H1 (cell line): ENCODE measurements at regions of chr22 and their contacts with region 1.

Region 1: DNA sequence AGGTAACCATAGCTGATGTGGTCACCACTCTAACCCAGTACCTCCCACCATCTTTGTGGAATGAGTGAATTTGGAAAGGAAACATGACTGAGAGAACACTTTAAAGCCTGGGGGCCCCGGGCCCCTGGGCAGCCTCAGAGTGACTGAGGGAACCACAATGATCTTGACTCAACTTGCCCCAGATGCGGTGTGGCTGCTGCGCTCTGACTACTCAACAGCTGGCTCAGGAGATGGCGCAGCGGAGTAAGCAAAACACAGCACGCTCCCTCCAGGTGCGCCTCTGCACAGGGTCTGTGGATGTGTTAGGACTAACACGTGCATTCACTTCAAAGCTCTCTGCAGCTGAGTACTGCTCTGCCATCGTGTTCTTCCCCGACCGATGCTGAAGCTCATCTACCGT is 5.9 kb downstream of the RNF215 start:
- DNase-seq: no peak
- H3K4me3 ChIP-seq: no peak overlapping the region
- H3K27ac ChIP-seq: no peak overlapping the region
- H3K4me1 ChIP-seq: peaks cover 0 to 3% (median 0%) of the 10 kb centered on the region in 4 experiments; a peak in 2 of 7 replicates
- H3K27me3 ChIP-seq: no peaks in the 10 kb centered on the region
- CTCF ChIP-seq: no peak
- EP300 ChIP-seq: no peak
- POLR2A ChIP-seq: no peak
- RAD21 ChIP-seq: no peak

Region 2: GRCh38 chr22:30356449-30357235 is 24.6 kb before region 1 on chr22 and contains the starts of genes CCDC157 and SF3A1:
- CTCF ChIA-PET with region 1: interaction called, 6 read pairs
- POLR2A ChIA-PET with region 1: interaction called, 11 read pairs
- DNase-seq: peak; percentile 72 to 91
- H3K4me3 ChIP-seq: peak within 1 kb of the TSS; percentile 78 to 93 (median 91)
- H3K27ac ChIP-seq: peak within 1 kb of the TSS; percentile 93
- H3K4me1 ChIP-seq: peaks cover 2 to 11% (median 4%) of the 10 kb centered on the region in 4 experiments; a peak in 6 of 7 replicates
- H3K27me3 ChIP-seq: no peaks in the 10 kb centered on the region
- CTCF ChIP-seq: no peak
- EP300 ChIP-seq: peak in 1 of 2 experiments; percentile 5; a peak in 1 of 3 replicates
- POLR2A ChIP-seq: peak; percentile 87 to 98
- RAD21 ChIP-seq: no peak
- total RNA-seq, gene CCDC157: 4.1 and 4.8 TPM in 2 replicates
- total RNA-seq, gene SF3A1: 275 and 285 TPM in 2 replicates

Region 3: GRCh38 chr22:30368431-30368830 is 12.8 kb before region 1 on chr22:
- CTCF ChIA-PET with region 1: interaction called, 28 read pairs
- POLR2A ChIA-PET with region 1: interaction called, 14 read pairs
- DNase-seq: no peak
- H3K4me3 ChIP-seq: no peak overlapping the region
- H3K27ac ChIP-seq: 0 out of 2 replicates have a peak overlapping the region, but pooled peaks have one; percentile 1
- H3K4me1 ChIP-seq: peaks cover 0 to 2% (median 0%) of the 10 kb centered on the region in 4 experiments; a peak in 1 of 7 replicates
- H3K27me3 ChIP-seq: no peaks in the 10 kb centered on the region
- CTCF ChIP-seq: no peak
- EP300 ChIP-seq: no peak
- POLR2A ChIP-seq: no peak
- RAD21 ChIP-seq: no peak